CD14-positive monocyte (primary cell): ENCODE measurements at regions of chr12 and their contacts with region 1.

Region 1: DNA sequence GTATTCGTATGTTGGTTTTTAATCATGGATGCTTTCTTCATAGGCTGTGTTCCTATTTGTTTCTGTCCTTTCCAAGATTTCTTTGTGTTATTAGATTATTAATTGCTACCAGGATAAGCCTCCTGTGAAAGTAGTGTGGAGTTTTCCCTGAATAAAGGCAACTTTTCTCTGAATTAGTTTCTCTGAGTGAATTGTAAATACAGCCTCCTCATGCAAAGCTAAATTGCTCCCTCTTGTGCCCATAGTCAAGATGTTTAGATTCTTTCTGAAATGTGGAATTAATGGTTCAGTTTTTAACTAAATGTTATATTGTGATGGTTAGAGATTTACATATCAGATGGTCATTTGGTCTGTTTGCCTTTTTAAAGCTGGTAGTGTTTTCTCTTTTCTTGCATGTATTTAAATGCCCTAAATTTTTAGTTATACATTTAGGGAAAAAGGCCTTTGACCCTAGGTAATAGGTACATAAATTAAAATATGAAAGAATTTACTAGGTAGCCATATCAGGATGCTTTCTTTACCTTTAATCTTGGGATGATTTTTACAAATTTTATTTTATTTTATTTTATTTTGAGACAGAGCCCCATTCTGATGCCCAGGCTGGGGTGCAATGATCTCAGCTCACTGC is 8.9 kb downstream of the APAF1 start:
- DNase-seq: peak; percentile 32 to 68 (median 48)
- H3K4me3 ChIP-seq: no peak overlapping the region
- H3K4me3 Mint-ChIP-seq: no peak overlapping the region
- H3K27ac ChIP-seq: no peak overlapping the region
- H3K27ac Mint-ChIP-seq: peak overlapping the region in 2 of 7 donors; percentile 27 to 75
- H3K4me1 ChIP-seq: no peaks in the 10 kb centered on the region
- H3K4me1 Mint-ChIP-seq: peaks cover 12% of the 10 kb centered on the region
- H3K27me3 ChIP-seq: no peaks in the 10 kb centered on the region
- H3K27me3 Mint-ChIP-seq: peaks cover 0 to 1% (median 0%) of the 10 kb centered on the region in 3 donors
- CTCF ChIP-seq: peak; percentile 71

Region 2: GRCh38 chr12:98532681-98533304 is 121.2 kb before region 1 on chr12:
- intact Hi-C with region 1: loop called in 1 of 2 experiments (anchors 10 kb)
- DNase-seq: peak; percentile 27 to 49 (median 44)
- H3K4me3 ChIP-seq: no peak overlapping the region
- H3K4me3 Mint-ChIP-seq: no peak overlapping the region
- H3K27ac ChIP-seq: peak overlapping the region in 1 of 2 donors; percentile 26
- H3K27ac Mint-ChIP-seq: peak overlapping the region in 1 of 7 donors; percentile 41
- H3K4me1 ChIP-seq: no peaks in the 10 kb centered on the region
- H3K4me1 Mint-ChIP-seq: no peaks in the 10 kb centered on the region
- H3K27me3 ChIP-seq: no peaks in the 10 kb centered on the region
- H3K27me3 Mint-ChIP-seq: no peaks in the 10 kb centered on the region
- CTCF ChIP-seq: peak; percentile 75

Region 3: GRCh38 chr12:98572010-98572409 is 82.0 kb before region 1 on chr12:
- intact Hi-C with region 1: loop called in 1 of 2 experiments (anchors 5 kb)
- DNase-seq: no peak
- H3K4me3 ChIP-seq: no peak overlapping the region
- H3K4me3 Mint-ChIP-seq: no peak overlapping the region
- H3K27ac ChIP-seq: no peak overlapping the region
- H3K27ac Mint-ChIP-seq: no peak overlapping the region
- H3K4me1 ChIP-seq: peaks cover 0 to 1% of the 10 kb centered on the region in 2 donors
- H3K4me1 Mint-ChIP-seq: peaks cover under 1% of the 10 kb centered on the region
- H3K27me3 ChIP-seq: no peaks in the 10 kb centered on the region
- H3K27me3 Mint-ChIP-seq: peaks cover 0 to 2% (median 0%) of the 10 kb centered on the region in 3 donors
- CTCF ChIP-seq: no peak